Dendritic cell treated with granulocyte-macrophage colony-stimulating factor and Interleukin-4, amounts not matched to agents 40 ng/mL and 50 ng/mL, for 4 days (primary cell): ENCODE measurements at regions of chr10 and their contacts with region 1.

Region 1: DNA sequence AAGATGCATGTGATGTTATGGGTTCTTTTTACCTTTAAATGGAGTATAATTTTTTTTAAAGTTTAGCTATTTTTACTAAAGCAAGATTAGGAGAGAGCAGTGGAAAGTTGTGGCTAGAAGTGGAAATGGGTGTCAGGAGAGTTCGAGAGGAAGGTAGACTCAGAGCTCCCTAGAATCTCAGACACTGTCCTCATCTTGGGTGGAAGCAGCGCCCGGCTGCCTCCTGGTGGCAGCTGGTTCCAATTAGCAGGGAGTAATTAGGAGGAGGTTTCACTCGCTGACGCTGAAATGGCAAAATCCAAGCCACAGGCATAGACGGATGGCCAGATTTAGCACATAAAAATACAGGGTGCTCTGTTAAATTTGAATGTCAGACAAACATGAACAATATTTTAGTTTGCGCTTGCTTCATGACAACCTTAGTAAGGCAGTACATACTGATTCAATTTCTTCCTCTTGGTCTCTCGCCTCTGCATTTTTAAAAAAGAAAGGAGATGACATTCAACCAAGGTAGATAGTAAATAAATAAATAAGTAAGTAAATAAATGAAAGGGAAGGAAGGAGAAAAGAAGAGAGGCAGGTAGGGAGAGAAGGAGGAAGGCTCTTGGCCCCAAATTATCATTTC is 58.5 kb downstream of the LGI1 start:
- H3K4me3 Mint-ChIP-seq: no peak overlapping the region
- H3K27ac Mint-ChIP-seq: no peak overlapping the region
- H3K4me1 Mint-ChIP-seq: peaks cover 32% of the 10 kb centered on the region
- H3K27me3 Mint-ChIP-seq: peaks cover 32% of the 10 kb centered on the region

Region 2: DNA sequence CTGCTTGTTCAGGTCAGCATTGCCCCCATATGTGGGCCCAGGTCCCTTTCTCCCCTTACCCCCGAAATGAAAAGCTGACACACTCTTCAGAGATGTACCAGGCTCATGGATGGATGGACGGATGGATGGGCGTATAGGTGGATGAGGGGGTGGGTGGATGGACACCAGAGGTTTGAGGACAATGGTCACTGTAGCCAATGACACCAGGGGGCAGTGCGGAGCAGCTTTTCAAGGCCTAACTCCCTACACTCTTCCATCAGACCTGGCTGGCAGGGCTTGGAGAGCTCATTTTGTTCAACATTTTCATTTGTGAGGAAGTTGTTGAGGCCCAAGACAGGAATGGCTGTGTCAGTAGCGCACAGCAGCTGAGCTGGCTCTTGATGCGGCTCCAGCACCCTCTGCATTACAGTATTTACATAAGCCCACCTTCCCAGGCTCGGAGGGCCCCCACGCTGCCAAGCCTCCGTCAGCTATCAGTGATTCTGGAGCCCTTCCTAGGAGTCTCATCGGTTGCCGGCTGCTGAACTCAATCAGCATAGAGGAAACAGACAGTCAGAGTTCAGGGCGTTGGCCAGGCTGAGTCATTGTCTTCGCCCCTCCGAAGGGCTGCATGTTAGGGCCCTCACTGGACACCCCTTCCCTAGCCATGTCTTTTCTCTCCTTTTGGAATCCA is 261.3 kb before region 1 on chr10:
- intact Hi-C with region 1: loop called (anchors 10 kb)
- H3K4me3 Mint-ChIP-seq: peak overlapping the region; percentile 20
- H3K27ac Mint-ChIP-seq: peak overlapping the region; percentile 93
- H3K4me1 Mint-ChIP-seq: peaks cover 32% of the 10 kb centered on the region
- H3K27me3 Mint-ChIP-seq: no peaks in the 10 kb centered on the region

Region 3: GRCh38 chr10:93702211-93703001 is 113.8 kb before region 1 on chr10 and contains the start of gene FRA10AC1:
- intact Hi-C with region 1: loop called (anchors 1 kb)
- H3K4me3 Mint-ChIP-seq: no peak within 1 kb of the TSS
- H3K27ac Mint-ChIP-seq: no peak within 1 kb of the TSS
- H3K4me1 Mint-ChIP-seq: peaks cover 5% of the 10 kb centered on the region
- H3K27me3 Mint-ChIP-seq: peaks cover 3% of the 10 kb centered on the region

Region 4: GRCh38 chr10:93746844-93747284 is 69.4 kb before region 1 on chr10:
- intact Hi-C with region 1: loop called (anchors 10 kb)
- H3K4me3 Mint-ChIP-seq: peak overlapping the region; percentile 48
- H3K27ac Mint-ChIP-seq: peak overlapping the region; percentile 30
- H3K4me1 Mint-ChIP-seq: peaks cover 52% of the 10 kb centered on the region
- H3K27me3 Mint-ChIP-seq: peaks cover 6% of the 10 kb centered on the region

Region 5: DNA sequence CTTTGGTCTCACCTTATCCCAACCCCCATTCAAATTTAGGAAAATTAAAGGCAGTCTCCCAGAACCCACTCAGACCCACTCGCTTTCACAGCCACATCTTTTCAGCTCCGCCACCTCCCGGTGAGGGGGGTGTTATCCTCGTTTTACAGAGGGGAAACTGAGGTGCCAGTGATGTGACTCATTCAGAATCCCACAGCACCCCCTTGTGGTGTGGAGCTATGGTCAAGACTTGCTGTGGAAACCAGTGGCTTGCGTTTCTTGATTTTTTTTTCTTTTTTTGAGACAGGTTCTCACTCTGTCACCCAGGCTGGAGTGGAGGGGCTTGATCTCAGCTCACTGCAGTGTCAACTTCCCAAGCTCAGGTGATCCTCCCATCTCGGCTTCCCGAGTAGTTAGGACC is 105.1 kb after region 1 on chr10:
- intact Hi-C with region 1: loop called (anchors 1 kb)
- H3K4me3 Mint-ChIP-seq: no peak overlapping the region
- H3K27ac Mint-ChIP-seq: no peak overlapping the region
- H3K4me1 Mint-ChIP-seq: no peaks in the 10 kb centered on the region
- H3K27me3 Mint-ChIP-seq: no peaks in the 10 kb centered on the region

Region 6: DNA sequence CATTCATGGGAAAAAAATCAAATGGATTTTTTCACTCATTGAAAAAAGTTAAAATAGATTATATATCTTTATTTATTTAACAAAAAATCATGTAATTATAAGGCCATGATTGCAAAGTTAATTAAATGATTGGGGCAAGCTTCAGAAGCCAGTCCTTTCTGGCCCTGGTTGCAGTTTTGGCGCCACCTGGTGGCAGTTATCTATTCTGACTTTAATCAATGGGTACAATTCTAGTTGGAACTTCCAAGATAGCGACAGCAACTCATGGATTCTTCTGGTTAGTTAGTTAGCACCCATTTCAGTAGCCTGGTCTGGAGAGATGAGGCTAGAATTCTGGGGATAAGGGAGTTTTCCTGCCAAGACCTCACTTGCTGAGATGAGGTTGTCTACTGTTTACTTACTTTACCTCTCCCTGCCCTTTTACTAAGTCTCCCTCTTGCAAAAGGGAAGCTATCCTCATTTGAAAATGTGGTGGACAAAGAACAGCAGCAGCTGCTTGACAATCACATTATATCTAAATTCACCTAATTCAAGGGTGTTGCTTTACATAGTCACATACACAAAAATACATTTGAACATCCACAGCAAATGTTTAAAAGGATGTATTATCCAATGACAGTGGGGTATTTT is 504.2 kb after region 1 on chr10:
- intact Hi-C with region 1: loop called (anchors 1 kb)
- H3K4me3 Mint-ChIP-seq: no peak overlapping the region
- H3K27ac Mint-ChIP-seq: no peak overlapping the region
- H3K4me1 Mint-ChIP-seq: no peaks in the 10 kb centered on the region
- H3K27me3 Mint-ChIP-seq: no peaks in the 10 kb centered on the region

Region 7: DNA sequence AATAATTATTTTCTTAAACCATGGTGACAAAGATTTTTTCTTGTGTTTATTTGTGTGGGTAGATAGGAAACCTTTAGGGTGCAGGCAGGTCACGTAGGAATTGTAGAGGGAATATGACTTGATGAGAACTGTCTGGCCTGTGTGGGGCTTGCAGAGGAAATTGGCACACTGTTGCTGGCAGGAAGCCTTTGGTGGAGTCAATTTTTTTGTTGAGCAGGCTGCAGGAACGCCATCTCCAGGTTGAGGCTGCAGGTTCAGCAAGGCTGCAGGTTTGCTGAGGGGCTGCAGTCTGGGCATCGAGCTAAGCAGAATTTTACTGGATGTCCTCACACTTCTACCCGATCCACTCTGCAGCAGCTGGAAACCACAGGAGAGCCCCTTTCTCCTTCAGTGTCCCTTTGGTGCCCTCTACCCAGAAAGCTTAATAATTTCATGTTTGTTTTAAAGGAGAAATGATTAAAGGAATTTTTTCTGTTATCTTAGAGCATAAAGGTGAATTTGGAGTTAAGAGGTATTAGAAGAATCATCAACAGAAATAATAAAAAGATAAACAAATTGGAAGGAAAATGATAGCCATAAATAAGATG is 623.1 kb after region 1 on chr10:
- intact Hi-C with region 1: loop called (anchors 2 kb)
- H3K4me3 Mint-ChIP-seq: no peak overlapping the region
- H3K27ac Mint-ChIP-seq: no peak overlapping the region
- H3K4me1 Mint-ChIP-seq: peaks cover 8% of the 10 kb centered on the region
- H3K27me3 Mint-ChIP-seq: no peaks in the 10 kb centered on the region